Common myeloid progenitor, CD34-positive (primary cell): ENCODE measurements at regions of chr11 and their contacts with region 1.

Region 1: GRCh38 chr11:119363851-119364590 is 17.5 kb downstream of the USP2 start:
- DNase-seq: peak; percentile 29 to 55 (median 53)
- H3K4me3 ChIP-seq: peak overlapping the region in 6 of 7 experiments; percentile 32 to 59 (median 52)
- H3K27ac ChIP-seq: no peak overlapping the region
- H3K4me1 ChIP-seq: peaks cover 0 to 37% (median 20%) of the 10 kb centered on the region in 4 experiments
- H3K27me3 ChIP-seq: peaks cover 3 to 50% (median 29%) of the 10 kb centered on the region in 5 experiments

Region 2: DNA sequence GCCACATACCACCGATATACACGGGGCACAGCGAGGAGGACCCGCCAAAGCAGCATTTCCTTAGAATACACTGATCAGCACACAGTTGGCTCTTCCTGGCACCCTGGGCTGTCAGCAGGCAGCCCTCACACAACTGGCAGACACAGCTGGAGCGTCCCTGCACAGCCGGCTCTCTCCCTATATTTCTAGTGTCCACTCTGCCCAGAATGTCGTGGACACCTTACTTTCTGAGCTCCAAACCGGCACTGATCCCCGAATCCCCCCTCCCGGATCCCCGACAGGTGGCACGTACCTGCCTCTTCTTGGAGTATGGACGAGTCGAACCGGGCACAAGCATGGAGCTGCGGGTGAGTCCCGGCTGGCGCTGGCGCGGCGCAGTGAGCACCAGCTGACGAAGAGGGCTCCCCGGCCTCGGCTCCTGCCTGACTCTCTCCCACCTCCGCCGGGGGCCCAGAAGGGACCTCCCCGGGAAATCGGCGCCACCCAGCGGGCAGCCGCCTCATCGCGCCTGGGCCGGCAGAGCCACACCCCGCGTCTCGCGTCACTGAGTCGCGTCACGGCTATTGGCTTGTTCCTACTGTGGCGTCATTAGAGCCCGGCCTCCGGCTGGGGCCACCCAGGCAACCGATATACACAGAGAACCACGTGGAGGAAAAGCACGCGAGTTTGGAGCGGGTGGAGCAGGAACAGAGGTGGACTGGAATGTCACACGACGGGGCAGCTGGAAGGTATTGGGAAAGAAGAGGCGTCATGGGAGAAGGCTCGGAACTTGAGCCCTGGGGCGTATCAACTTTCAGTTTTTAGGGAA is 17.4 kb after region 1 on chr11 and contains the start of gene USP2:
- CTCF ChIA-PET with region 1: interaction called, 132 read pairs
- POLR2A ChIA-PET with region 1: interaction called, 3 read pairs
- DNase-seq: peak; percentile 95 to 96 (median 95)
- H3K4me3 ChIP-seq: peak within 1 kb of the TSS; percentile 32 to 84 (median 74)
- H3K27ac ChIP-seq: peak within 1 kb of the TSS; percentile 54 to 80
- H3K4me1 ChIP-seq: peaks cover 0 to 18% (median 16%) of the 10 kb centered on the region in 4 experiments
- H3K27me3 ChIP-seq: peaks cover 2 to 14% (median 6%) of the 10 kb centered on the region in 5 experiments